ENCODE measurements at regions of chr16 and their contacts with region 1.

Region 1: DNA sequence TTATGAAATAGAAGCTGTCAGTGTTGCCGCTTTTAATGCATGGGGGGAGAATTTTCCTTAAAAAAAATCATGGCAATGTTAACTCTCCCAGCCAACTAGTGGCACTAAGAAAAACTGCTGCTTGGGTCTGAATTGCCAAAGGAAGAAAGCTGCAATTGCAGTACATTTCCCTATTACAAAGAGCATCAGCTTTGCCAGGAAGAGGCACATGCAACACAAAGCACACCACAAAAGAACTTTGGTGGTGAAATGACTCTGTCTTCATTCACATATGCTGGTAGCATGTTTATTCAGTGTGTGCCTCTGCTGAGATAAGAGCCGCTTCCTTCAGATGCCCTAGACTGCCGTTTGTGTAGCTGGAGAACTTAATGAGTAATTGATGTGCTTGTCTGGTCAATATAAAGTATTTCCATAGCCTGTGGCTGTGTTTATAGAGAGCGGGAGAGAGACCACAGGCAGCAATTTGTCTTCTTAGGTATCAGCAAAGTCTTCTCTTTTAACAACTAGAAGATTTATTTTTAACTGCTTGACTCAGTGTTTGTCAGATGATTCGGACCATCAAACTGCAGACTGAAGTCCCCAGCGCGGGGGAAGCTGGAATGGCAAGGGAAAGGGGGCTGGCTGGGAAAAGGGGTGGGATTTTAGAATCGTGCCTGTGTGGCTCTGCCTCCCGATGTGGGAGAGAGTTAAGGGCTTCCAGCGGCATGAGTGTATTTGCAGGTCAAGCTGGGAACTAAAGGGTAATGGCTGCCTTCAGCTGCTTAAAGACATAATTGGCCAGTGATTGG is 115.1 kb downstream of the MRTFB start:
- DNase-seq: peak; percentile 43
- ATAC-seq: peak; percentile 81 to 82

Region 2: DNA sequence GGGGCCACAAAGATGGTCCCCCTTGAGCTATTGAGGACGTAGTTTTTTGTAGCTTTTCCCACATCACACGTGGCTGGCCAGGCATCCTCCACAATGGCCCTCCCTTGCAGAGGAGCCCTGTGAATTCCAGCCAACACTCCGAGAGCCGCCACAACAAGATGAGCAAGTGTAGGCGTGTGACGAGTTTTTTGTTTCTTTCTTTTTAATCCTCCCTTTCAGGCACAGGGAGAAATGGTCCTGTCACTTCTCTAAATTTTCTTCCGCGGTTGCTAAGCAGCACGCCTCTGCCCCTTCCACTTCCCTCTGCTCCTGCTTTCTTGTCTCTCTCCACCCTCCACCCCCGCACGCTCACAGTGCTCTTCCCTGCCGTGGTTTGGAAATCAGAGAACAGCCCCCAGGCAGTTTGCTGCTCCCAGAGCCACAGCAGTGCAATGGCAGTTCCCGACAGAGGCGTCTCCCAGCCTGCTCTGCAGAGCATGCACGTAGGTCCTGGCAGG is 183.1 kb before region 1 on chr16:
- intact Hi-C with region 1: loop called in 1 of 2 experiments (anchors 5 kb)
- DNase-seq: peak; percentile 68
- ATAC-seq: peak; percentile 55 to 84

Region 3: DNA sequence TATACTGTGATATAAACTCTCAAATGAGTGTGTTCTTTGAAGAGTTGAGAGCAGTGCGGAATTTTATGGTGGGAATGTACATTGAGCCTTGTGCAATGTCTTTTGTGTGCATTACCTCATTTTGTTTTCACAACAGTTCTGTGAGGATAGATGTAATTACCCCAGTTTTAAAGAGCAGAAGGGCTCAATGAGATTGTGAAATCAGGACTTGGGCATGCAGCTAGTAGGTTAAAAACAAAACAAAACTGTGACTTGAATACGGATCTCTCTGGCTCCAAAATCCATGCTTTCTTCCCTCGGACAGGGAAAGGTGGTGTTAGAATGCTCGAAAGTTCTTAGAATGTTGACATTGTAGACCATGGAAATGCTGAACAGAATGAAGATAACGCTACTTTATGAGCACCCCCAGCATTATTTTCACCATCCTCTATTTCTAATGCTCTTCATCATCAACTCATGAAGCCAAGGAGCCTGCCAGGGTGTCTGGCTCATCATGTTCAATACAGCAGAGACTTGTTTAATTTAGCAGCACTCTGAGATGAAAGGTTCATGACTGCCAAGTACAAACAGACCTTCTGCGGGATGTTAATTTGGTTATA is 97.9 kb before region 1 on chr16:
- intact Hi-C with region 1: loop called in 1 of 2 experiments (anchors 10 kb)
- DNase-seq: no peak
- ATAC-seq: peak; percentile 46 to 68

Region 4: GRCh38 chr16:14101415-14101814 is 84.8 kb before region 1 on chr16:
- intact Hi-C with region 1: loop called in 1 of 2 experiments (anchors 10 kb)
- DNase-seq: no peak
- ATAC-seq: no peak

Region 5: DNA sequence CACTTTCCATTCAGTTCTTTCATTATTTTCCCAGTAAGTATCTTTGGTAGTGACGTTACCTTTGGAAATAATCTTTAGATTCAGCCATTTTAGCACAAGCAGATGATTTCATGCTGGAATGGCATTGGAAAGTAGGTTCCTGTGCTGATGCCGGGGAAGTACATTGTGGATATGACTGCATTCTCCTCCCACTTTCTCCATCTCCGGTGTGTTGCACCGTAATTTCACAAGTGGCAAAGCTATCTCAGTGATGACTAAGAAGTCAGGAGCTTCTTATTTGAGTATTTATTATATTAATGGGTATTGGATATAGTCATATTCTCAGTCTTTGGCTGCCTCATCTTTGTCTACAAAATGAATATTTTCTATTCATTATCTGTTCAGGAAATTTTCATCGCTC is 45.3 kb before region 1 on chr16:
- intact Hi-C with region 1: no loop called
- DNase-seq: no peak
- ATAC-seq: no peak

Region 6: DNA sequence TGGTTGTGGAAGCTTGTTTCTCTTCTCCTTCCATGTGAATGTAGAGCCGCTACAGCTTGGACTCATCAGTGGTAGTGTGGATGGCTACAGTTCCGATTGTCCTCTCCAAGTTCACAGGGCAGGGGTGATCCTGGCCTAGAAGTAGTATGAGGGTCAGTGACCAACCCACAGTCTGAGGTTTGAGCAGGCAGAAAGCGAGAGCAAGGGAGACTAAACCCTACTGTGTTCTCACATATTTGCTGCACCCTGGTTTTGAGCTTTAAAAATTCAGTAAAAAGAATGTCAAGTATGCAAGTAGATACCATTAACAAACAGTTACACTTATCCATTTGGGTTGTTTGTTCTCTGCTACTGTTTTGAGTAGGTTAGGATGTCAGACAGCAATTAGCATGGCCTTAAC is 33.8 kb after region 1 on chr16:
- intact Hi-C with region 1: no loop called
- DNase-seq: no peak
- ATAC-seq: no peak

Region 7: DNA sequence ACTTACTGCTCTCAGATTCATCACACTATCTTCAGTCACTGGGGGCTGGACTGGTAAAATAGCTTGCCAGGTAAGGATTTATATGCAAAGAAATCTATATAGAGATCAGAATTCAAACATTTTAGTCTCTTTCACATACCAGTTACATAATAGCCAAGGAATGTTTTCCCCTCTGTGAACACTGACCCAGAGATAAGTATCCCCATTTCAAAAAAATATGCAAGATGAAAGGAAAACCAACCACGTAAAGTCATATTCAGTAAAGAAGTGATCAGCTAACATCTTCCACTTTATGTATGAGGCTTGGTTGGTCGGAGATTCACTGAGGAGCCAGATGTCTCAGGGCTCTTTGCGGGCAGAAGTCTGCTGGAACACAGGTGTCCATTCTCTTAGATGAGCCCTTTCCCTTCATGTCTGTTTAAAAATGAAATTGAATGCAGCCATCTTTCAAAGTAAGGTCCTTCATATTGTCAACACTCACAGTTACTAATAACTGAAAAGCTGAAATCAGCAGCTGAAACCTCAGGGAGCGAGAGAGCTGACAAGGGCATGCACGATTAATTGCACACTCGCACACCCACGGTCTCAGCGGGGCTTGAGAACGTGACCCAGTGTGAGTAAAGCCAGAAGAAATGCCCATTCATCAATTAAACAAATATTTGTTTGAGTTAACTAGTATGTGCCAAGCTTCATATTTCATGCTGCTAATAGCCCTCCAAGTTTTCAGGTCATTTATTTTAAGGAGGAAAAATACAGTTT is 46.1 kb after region 1 on chr16:
- intact Hi-C with region 1: no loop called
- DNase-seq: no peak
- ATAC-seq: no peak

Measured in left cardiac atrium (tissue), 4 donors.